PC-3 (cell line): ENCODE measurements at regions of chr2 and their contacts with region 1.

Region 1: DNA sequence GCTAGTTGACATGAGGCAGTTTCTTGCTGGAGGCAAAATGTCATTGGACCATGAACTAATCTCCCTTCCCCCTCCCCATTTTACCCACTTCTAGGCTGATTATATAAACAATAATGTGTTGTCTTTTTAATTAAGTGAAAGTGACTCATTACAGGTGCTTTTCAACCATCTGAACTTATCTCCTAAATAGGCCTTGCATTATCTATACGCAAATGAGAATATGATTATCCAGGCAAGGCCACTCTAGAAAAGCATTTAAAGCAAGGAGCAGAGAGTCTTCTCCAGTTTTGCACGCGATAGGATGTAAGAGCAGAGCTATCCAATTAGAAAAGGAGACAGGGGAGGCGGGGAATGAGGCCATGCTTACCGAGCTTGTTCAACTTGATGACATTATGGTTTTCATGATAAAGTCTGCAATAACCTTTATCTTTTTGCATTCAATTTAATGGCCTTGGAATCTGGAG is 286.1 kb upstream of the SIX3 start:
- DNase-seq: no peak
- ATAC-seq: no peak
- H3K4me3 ChIP-seq: no peak overlapping the region
- H3K27ac ChIP-seq: no peak overlapping the region
- H3K4me1 ChIP-seq: no peaks in the 10 kb centered on the region
- H3K27me3 ChIP-seq: no peaks in the 10 kb centered on the region
- CTCF ChIP-seq: no peak

Region 2: DNA sequence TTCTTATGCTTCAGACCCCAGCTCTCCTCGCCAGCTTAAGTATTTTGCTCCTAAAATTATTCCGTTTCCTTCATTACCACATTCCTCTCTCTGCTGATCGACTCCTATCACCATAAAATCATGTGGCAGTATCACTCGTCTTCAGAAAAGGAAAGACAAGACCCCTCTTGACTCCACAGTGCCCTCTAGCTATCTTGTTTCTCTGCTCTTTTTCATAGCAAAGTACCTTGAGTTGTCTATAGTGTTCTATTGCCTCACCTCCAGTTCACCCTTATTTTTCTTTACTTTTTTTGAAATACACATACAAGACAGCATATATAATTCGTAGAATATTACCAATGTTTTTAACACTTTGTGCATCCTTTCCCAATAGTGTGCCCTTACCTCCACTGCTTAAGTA is 12.9 kb after region 1 on chr2:
- CTCF ChIA-PET with region 1: interaction called, 16 read pairs
- POLR2A ChIA-PET with region 1: no interaction called
- intact Hi-C with region 1: no loop called
- DNase-seq: peak; percentile 48
- ATAC-seq: no peak
- H3K4me3 ChIP-seq: no peak overlapping the region
- H3K27ac ChIP-seq: no peak overlapping the region
- H3K4me1 ChIP-seq: no peaks in the 10 kb centered on the region
- H3K27me3 ChIP-seq: no peaks in the 10 kb centered on the region
- CTCF ChIP-seq: peak; percentile 71